Endothelial cell of umbilical vein (primary cell): ENCODE measurements at regions of chr4 and their contacts with region 1.

Region 1: DNA sequence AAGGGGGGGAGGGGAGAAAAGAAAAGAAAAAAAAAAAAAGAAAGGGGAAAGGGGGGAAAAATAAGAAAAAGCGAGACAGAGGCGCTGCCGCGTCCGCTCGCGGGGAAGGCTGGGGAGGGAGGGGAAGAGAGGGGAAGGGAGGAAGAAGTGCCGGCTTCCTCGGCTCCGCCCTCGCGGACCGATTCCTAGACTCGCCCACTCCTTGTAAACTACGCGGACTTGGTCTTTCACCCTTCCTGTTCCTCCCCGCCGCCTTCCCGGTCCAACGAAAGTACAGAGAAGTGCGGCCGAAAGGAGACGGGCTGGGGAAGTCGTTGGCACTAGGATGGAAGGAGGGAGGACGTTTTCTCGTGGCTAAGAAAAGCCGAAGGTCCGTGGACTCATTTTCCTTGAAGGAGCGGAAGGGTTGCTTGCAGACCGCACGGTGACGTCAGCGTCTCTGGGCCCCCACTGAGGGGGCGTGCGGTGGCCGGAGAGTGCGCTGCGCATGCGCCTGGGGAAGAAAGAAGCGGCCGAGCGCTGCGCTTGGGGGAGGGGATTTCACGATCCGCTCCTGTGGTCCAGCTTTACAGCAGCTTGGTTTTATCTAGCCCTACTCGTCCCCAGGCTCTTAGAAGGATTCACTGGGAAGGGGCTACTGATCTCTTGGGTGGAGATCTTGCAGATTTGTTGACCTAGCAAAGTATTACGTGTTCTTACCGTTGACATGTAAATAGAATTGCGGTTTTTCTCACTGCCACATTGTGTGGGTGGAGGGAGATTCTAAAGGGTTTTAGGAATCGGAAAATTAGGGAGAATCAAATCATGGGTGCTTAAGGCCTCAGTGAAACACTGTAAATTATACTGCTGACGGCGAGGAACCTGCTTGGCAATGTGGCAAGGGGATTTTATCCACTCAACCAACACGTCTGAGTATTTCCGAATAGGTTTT is at the start of gene CCNI:
- DNase-seq: peak; percentile 99
- H3K4me3 ChIP-seq: peak within 1 kb of the TSS; percentile 83 to 98 (median 90)
- H3K27ac ChIP-seq: peak within 1 kb of the TSS; percentile 98
- H3K4me1 ChIP-seq: peaks cover 22% of the 10 kb centered on the region
- H3K27me3 ChIP-seq: no peaks in the 10 kb centered on the region
- CTCF ChIP-seq: no peak
- POLR2A ChIP-seq: peak; percentile 94
- total RNA-seq, gene CCNI: 212 and 227 TPM in 2 replicates

Region 2: GRCh38 chr4:76148142-76148865 is 927.8 kb before region 1 on chr4 and contains the start of gene NUP54:
- CTCF ChIA-PET with region 1: no interaction called
- POLR2A ChIA-PET with region 1: no interaction called
- dilution Hi-C with region 1: no loop called
- intact Hi-C with region 1: loop called (anchors 10 kb)
- DNase-seq: peak; percentile 97
- H3K4me3 ChIP-seq: peak within 1 kb of the TSS; percentile 87 to 91 (median 89)
- H3K27ac ChIP-seq: peak within 1 kb of the TSS; percentile 71
- H3K4me1 ChIP-seq: peaks cover 23% of the 10 kb centered on the region
- H3K27me3 ChIP-seq: no peaks in the 10 kb centered on the region
- CTCF ChIP-seq: no peak
- POLR2A ChIP-seq: peak; percentile 64
- total RNA-seq, gene NUP54: 45.7 and 49.9 TPM in 2 replicates

Region 3: GRCh38 chr4:76748649-76749048 is 327.5 kb before region 1 on chr4:
- CTCF ChIA-PET with region 1: no interaction called
- POLR2A ChIA-PET with region 1: no interaction called
- dilution Hi-C with region 1: no loop called
- intact Hi-C with region 1: no loop called
- DNase-seq: peak; percentile 57
- H3K4me3 ChIP-seq: no peak overlapping the region
- H3K27ac ChIP-seq: no peak overlapping the region
- H3K4me1 ChIP-seq: peaks cover 24% of the 10 kb centered on the region
- H3K27me3 ChIP-seq: no peaks in the 10 kb centered on the region
- CTCF ChIP-seq: peak; percentile 28 to 35
- POLR2A ChIP-seq: no peak

Region 4: DNA sequence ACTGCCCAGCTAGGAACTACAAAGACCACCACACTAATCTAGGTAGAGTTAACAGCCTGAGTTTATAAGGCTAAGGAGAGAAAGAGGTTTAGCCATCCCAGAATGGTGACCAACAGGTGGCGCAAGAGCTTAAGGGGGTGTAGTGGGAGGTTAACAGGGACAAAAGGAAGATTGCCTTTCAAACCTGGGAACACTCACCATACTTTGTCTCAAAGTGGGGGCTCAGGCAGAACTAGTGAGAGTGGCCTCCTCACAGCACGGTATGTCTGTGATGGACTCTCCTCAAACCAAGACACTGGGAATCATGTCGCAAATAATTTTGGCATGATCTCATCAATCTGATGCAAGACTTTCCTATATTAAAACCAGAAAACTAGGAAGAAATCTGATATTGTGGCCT is 23.8 kb before region 1 on chr4:
- CTCF ChIA-PET with region 1: interaction called, 9 read pairs
- POLR2A ChIA-PET with region 1: no interaction called
- dilution Hi-C with region 1: no loop called
- intact Hi-C with region 1: loop called (anchors 2 kb)
- DNase-seq: peak; percentile 58
- H3K4me3 ChIP-seq: no peak overlapping the region
- H3K27ac ChIP-seq: no peak overlapping the region
- H3K4me1 ChIP-seq: peaks cover 3% of the 10 kb centered on the region
- H3K27me3 ChIP-seq: no peaks in the 10 kb centered on the region
- CTCF ChIP-seq: peak; percentile 66 to 70
- POLR2A ChIP-seq: no peak

Region 5: DNA sequence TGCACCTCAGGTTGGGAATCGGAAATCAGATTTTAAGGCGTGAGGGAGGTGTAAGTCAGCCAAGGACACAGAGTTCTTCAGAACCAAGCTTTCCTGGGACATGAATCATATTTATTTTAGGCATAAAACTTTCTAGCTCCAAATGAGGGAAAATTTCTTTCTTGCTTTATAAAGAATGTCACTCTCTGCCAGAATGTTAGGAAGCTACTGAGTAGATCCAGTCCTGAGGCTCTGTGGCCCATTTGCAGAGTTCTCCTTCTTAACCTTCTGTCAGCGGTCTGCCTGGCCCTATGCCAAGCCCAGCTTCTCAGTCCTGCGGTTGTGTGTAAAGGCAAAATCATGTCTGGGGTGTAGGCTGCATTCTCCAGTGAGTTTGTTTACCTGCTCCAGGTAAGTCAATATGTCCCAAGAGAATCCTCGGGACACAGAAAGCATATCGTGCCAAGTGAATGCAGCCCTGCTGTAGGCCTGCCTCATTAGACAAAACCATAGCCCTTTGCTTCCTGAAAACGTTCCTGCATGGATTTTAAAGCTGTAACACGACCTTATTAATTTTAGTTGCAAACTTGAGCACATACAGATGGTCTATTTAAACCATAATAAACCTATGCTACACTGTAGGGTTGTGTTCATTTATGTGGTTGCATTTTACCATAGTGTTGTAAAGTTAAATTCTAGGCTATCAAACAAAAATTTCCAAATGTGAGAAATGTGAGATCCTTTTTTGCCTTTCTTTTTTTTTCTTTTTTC is 28.8 kb after region 1 on chr4:
- CTCF ChIA-PET with region 1: interaction called, 3 read pairs
- POLR2A ChIA-PET with region 1: interaction called, 3 read pairs
- dilution Hi-C with region 1: no loop called
- intact Hi-C with region 1: loop called (anchors 1 kb)
- DNase-seq: no peak
- H3K4me3 ChIP-seq: no peak overlapping the region
- H3K27ac ChIP-seq: no peak overlapping the region
- H3K4me1 ChIP-seq: peaks cover 9% of the 10 kb centered on the region
- H3K27me3 ChIP-seq: peaks cover 28 to 41% of the 10 kb centered on the region in 2 experiments
- CTCF ChIP-seq: no peak
- POLR2A ChIP-seq: no peak

Region 6: GRCh38 chr4:77156533-77156911 is 80.4 kb after region 1 on chr4:
- CTCF ChIA-PET with region 1: no interaction called
- POLR2A ChIA-PET with region 1: interaction called, 8 read pairs
- dilution Hi-C with region 1: no loop called
- intact Hi-C with region 1: loop called (anchors 1 kb)
- DNase-seq: peak; percentile 99
- H3K4me3 ChIP-seq: peak overlapping the region; percentile 75 to 98 (median 80)
- H3K27ac ChIP-seq: peak overlapping the region; percentile 86
- H3K4me1 ChIP-seq: peaks cover 15% of the 10 kb centered on the region
- H3K27me3 ChIP-seq: peaks cover 19 to 22% of the 10 kb centered on the region in 2 experiments
- CTCF ChIP-seq: no peak
- POLR2A ChIP-seq: peak; percentile 57